ENCODE measurements at regions of chr12 and their contacts with region 1.

Region 1: DNA sequence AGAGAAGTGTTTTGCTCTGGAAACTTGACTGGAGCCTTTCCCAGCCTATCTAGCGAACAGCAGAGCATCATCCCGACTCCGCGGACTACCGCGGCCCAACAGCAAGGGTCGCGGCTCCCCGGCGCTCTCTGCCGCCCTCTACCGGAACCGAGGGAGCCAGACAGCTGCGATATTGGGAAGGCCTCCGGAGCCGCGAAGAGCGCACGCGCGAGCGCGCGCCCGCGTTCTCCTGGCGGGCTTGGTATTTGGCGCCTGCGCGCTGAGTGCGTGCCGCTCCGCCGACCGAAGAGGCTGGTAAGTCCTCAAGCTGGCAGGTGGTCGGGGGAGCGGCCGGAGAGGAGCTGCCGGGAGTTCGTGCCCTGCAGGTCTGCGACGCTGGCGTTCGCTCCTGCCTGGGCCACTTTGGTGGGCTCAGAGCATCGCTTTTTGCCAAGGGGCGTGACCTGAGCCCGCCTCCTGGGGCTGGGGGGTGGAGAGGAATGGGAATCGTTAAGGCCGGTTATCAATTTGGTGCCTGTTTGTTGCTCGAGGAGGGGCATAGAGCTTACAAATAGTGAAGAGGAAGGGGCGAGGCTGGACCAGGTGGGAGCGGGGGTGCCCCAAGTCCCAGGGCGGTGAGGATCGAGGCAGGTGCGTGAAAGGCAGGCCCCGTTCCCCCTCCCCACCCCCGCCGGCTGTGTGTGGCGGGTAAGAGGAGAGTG is at the start of gene TMEM106C:
- DNase-seq: peak; percentile 82 to 96 (median 90)
- ATAC-seq: peak; percentile 98
- H3K4me3 ChIP-seq: peak within 1 kb of the TSS; percentile 67 to 76
- H3K4me3 Mint-ChIP-seq: peak within 1 kb of the TSS; percentile 97
- H3K27ac ChIP-seq: peak within 1 kb of the TSS in 1 of 2 experiments; percentile 43
- H3K27ac Mint-ChIP-seq: peak within 1 kb of the TSS; percentile 83
- H3K4me1 ChIP-seq: peaks cover 13% of the 10 kb centered on the region
- H3K4me1 Mint-ChIP-seq: peaks cover 25% of the 10 kb centered on the region
- H3K27me3 ChIP-seq: no peaks in the 10 kb centered on the region
- H3K27me3 Mint-ChIP-seq: peaks cover 11% of the 10 kb centered on the region
- CTCF ChIP-seq: peak; percentile 93
- total RNA-seq, gene TMEM106C: 12.1 to 13.1 TPM

Region 2: DNA sequence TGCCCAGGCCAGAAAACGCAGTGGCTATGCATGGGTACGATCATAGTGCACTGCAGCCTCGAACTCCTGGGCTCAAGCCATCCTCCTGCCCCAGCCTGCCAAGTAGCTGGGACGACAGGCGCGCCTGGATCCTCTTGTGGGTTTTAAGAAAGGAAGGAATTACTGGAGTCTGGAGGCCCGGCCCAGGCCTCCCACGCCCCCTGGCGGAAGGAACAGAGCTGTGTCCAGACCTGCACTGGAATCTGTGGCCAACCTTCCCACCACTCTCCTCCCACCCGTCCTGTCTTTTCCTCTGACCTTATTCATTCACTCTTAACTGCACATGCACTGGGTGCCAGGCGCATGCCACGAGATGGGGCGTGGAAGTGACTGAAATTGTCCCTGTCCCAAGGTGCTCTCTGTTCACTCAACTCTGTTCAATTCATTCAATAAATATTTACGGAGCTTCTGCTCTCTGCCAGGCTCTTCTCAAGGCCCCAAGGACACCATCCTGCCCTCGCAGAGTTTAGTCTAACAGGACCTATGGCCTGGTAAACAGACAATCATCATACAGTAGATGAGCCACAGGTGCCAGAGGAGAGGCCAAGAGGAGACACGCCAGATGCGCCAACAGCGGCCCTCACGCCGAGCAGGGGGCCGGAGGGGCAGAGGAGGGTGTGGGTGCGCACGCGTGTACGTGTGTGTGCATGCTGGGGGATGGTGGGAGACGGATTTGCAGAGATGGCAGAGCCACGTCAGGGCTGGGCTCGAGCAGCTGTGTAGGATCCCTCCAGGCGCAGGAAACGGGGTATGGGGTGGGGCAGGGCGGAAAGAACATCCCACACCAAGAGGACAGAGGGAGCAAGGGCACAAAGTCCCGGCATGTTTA is 13.8 kb before region 1 on chr12:
- CTCF ChIA-PET with region 1: interaction called, 15 read pairs
- POLR2A ChIA-PET with region 1: interaction called, 3 read pairs
- intact Hi-C with region 1: no loop called
- DNase-seq: peak in 6 of 9 experiments; percentile 15 to 59 (median 42)
- ATAC-seq: peak; percentile 61
- H3K4me3 ChIP-seq: no peak overlapping the region
- H3K4me3 Mint-ChIP-seq: no peak overlapping the region
- H3K27ac ChIP-seq: no peak overlapping the region
- H3K27ac Mint-ChIP-seq: no peak overlapping the region
- H3K4me1 ChIP-seq: no peaks in the 10 kb centered on the region
- H3K4me1 Mint-ChIP-seq: no peaks in the 10 kb centered on the region
- H3K27me3 ChIP-seq: peaks cover 0 to 1% of the 10 kb centered on the region in 2 experiments
- H3K27me3 Mint-ChIP-seq: peaks cover 8% of the 10 kb centered on the region
- CTCF ChIP-seq: peak; percentile 66

Region 3: DNA sequence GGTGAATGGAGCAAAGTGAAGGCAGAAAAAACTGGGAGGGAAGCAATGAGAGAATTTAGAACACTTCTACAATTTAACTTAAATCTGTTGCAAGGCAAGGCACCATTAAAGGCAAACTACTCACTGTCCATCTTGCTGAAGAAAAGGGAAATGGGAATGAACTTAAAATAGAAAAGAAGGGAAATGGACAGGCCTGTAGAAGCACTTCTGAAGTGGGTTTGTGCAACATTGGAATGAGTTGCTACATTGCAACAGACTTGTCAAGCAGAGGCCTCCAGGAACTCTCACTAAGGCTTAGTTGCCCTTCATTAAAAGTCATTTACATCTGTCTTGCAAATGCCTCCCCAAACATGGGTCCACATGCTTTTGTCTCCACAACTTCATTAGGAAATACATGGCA is 253.3 kb after region 1 on chr12:
- CTCF ChIA-PET with region 1: no interaction called
- POLR2A ChIA-PET with region 1: no interaction called
- intact Hi-C with region 1: no loop called
- DNase-seq: no peak
- ATAC-seq: no peak
- H3K4me3 ChIP-seq: no peak overlapping the region
- H3K4me3 Mint-ChIP-seq: no peak overlapping the region
- H3K27ac ChIP-seq: no peak overlapping the region
- H3K27ac Mint-ChIP-seq: no peak overlapping the region
- H3K4me1 ChIP-seq: peaks cover 8% of the 10 kb centered on the region
- H3K4me1 Mint-ChIP-seq: peaks cover 14% of the 10 kb centered on the region
- H3K27me3 ChIP-seq: peaks cover 0 to 5% of the 10 kb centered on the region in 2 experiments
- H3K27me3 Mint-ChIP-seq: peaks cover 7% of the 10 kb centered on the region
- CTCF ChIP-seq: no peak